MCF 10A (cell line): ENCODE measurements at regions of chr11 and their contacts with region 1.

Region 1: GRCh38 chr11:118435893-118436624 is at the start of gene KMT2A:
- DNase-seq: peak; percentile 96
- H3K4me3 Mint-ChIP-seq: peak within 1 kb of the TSS; percentile 96
- H3K27ac Mint-ChIP-seq: peak within 1 kb of the TSS; percentile 71
- H3K4me1 Mint-ChIP-seq: peaks cover 37% of the 10 kb centered on the region
- H3K27me3 Mint-ChIP-seq: no peaks in the 10 kb centered on the region
- CTCF ChIP-seq: no peak
- total RNA-seq, gene KMT2A: 52.0 and 62.9 TPM in 2 replicates

Region 2: DNA sequence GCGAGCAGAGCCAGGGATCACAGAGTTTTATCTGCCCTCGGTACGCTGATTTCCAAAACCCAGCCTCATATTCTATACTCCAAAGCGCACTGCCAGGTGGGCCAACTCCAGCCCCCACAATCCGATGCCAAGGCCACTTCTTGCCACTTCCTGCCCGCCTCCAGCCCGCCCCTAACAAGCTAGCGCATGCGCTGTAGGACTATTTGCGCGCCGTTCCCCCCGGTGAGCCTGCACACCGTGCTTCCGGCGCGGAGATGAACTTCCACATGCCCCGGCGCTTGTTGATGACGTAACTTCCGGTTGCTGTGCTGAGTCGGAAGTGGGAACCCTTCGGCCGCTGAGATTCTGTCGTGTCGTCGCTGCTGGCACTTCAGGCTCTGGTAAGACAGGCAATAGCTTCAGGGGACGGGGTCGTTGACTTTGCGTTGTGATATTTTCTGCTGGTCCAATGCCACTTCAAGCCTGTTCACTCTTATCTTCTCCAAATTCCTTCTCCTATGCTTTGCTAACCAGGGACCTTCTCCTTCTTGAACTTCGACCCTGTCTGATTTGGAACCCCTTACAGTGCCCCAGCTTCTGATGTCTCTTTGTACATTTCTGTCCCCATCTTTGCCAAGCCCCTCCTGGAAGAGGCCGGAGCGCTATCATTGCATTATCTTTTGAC is 76.6 kb before region 1 on chr11 and contains the start of gene UBE4A:
- CTCF ChIA-PET with region 1: interaction called, 5 read pairs
- POLR2A ChIA-PET with region 1: interaction called, 10 read pairs
- intact Hi-C with region 1: no loop called
- DNase-seq: peak; percentile 91
- H3K4me3 Mint-ChIP-seq: peak within 1 kb of the TSS; percentile 90
- H3K27ac Mint-ChIP-seq: peak within 1 kb of the TSS; percentile 89
- H3K4me1 Mint-ChIP-seq: no peaks in the 10 kb centered on the region
- H3K27me3 Mint-ChIP-seq: peaks cover 12% of the 10 kb centered on the region
- CTCF ChIP-seq: no peak
- total RNA-seq, gene UBE4A: 41.0 and 47.7 TPM in 2 replicates

Region 3: DNA sequence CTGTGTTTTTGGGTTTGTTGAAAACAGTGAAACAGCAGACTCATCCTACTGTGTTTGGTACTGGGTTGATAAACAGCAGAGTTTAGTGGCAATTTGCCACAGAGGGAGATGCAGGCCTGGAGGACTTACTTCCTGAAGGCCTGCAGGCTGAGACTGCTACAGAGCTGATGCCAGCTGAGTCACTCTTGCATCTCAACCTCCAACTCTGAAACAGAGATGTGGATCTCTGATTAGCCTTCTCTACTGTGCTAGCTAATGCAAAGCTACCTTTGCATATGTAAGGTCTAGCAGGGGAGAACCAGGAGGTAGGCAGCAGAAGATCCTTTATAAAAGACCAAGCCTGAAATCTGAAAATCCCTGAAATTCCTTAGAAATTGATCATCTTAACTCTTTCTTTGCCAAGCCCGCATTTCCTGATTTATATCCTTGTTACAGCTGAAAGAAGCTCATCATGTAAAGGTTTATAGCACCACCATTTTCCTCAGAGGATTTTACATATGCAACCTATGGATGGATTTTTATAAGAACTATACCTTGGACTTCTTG is 20.2 kb before region 1 on chr11:
- CTCF ChIA-PET with region 1: interaction called, 3 read pairs
- POLR2A ChIA-PET with region 1: interaction called, 12 read pairs
- intact Hi-C with region 1: no loop called
- DNase-seq: peak; percentile 84
- H3K4me3 Mint-ChIP-seq: no peak overlapping the region
- H3K27ac Mint-ChIP-seq: no peak overlapping the region
- H3K4me1 Mint-ChIP-seq: no peaks in the 10 kb centered on the region
- H3K27me3 Mint-ChIP-seq: no peaks in the 10 kb centered on the region
- CTCF ChIP-seq: no peak

Region 4: DNA sequence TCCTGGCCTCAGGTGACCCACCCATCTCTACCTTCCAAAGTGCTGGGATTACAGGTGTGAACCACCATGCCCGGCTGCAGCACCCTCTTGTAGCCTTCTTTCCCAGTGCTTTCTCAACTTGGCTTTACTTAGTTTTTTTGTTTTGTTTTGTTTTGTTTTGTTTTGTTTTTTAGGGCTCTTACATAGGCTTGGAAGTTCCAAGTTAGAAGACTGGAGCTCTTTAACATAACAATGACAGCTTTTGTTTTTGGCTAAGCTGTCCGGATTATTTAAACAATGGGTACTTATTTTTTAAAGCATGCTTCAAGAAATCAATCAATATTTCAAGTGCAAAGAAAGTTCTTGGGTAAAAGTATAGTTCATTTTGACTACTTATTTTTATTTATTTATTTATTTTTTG is 26.1 kb after region 1 on chr11:
- CTCF ChIA-PET with region 1: no interaction called
- POLR2A ChIA-PET with region 1: interaction called, 10 read pairs
- intact Hi-C with region 1: no loop called
- DNase-seq: no peak
- H3K4me3 Mint-ChIP-seq: no peak overlapping the region
- H3K27ac Mint-ChIP-seq: no peak overlapping the region
- H3K4me1 Mint-ChIP-seq: no peaks in the 10 kb centered on the region
- H3K27me3 Mint-ChIP-seq: no peaks in the 10 kb centered on the region
- CTCF ChIP-seq: no peak

Region 5: DNA sequence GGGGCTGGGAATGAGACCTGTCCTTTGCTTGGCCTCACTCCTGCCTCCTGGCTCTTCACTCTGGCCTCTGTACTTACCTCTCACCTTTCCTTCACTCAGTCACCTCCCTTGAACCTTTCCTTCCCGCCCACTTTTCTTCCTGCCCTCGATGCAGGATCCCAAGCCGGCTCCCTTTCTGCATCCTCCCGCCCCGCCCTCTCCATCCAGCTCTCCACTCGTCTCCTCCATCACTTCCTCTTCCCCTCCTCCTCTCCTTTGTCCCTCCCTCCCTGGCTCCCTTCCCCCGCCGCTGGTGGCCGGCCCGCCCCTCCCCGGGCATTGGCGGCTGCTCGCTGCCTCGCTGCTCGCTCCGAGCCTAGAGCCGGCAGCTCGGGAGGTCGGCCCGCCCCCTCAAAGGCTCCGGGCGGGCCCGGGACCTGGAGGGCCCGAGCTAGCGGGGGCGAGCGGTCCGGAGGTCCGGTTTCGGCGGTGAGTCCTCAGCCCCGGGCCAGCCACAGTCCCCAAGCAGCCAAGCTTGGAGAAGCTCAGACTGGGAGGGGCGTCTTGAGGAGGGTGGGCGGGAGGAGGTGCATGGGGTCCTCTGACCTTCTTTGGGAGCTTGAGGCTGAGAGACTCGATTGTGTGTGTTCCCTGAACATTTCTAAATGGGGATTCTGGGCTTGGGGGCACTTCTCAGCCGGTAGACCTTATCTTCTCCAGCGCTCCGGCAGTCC is 185.2 kb after region 1 on chr11:
- CTCF ChIA-PET with region 1: no interaction called
- POLR2A ChIA-PET with region 1: interaction called, 12 read pairs
- intact Hi-C with region 1: no loop called
- DNase-seq: peak; percentile 89
- H3K4me3 Mint-ChIP-seq: peak overlapping the region; percentile 71
- H3K27ac Mint-ChIP-seq: peak overlapping the region; percentile 38
- H3K4me1 Mint-ChIP-seq: peaks cover 73% of the 10 kb centered on the region
- H3K27me3 Mint-ChIP-seq: no peaks in the 10 kb centered on the region
- CTCF ChIP-seq: no peak

Region 6: GRCh38 chr11:119134389-119134978 is 698.4 kb after region 1 on chr11:
- CTCF ChIA-PET with region 1: no interaction called
- POLR2A ChIA-PET with region 1: no interaction called
- intact Hi-C with region 1: no loop called
- DNase-seq: peak; percentile 18
- H3K4me3 Mint-ChIP-seq: no peak overlapping the region
- H3K27ac Mint-ChIP-seq: no peak overlapping the region
- H3K4me1 Mint-ChIP-seq: no peaks in the 10 kb centered on the region
- H3K27me3 Mint-ChIP-seq: peaks cover 19% of the 10 kb centered on the region
- CTCF ChIP-seq: peak; percentile 49